PC-3 (cell line): ENCODE measurements at regions of chrX and their contacts with region 1.

Region 1: DNA sequence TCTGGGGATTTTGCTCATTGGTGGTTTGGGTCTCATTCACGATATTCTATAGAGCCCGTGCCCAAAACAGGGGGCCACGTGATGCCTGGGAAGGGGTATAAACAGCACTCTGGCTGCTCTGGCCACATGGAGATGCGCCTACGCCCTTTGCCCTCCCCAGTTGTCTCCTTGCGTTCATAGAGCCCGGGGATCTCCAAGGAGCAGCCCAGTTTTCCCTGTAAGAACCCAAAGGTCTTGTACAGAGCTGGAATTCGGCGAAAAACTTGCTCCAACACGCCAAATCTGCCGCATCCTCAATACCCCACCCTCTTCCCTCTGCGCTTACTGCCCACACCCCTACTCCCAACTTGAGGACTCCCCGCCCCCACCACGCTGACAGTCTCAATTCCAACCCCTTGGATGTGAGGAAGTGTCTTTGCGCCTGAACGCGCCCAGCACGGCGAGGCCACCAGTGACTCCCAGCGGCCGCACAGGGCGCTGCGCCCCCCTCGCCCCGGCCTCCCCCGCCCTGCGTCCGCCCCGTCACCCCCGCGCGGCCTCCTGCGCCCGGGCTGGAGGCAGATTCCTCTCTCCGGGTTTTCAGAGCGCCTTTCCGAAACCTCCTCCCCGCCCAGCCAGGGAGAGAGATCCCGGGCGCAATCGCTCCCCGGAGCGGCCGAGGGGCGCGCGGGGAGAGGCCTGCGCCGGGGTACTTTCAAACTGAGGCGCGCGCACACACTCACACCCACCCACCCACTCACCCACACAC is at the start of gene NHS:
- DNase-seq: peak; percentile 83
- ATAC-seq: peak; percentile 57
- H3K4me3 ChIP-seq: peak within 1 kb of the TSS; percentile 91
- H3K27ac ChIP-seq: peak within 1 kb of the TSS; percentile 26; the same call in 1 of the 2 replicates
- H3K4me1 ChIP-seq: peaks cover 14% of the 10 kb centered on the region
- H3K27me3 ChIP-seq: no peaks in the 10 kb centered on the region
- CTCF ChIP-seq: peak; percentile 57
- total RNA-seq, gene NHS: 4.9 and 5.6 TPM in 2 replicates

Region 2: DNA sequence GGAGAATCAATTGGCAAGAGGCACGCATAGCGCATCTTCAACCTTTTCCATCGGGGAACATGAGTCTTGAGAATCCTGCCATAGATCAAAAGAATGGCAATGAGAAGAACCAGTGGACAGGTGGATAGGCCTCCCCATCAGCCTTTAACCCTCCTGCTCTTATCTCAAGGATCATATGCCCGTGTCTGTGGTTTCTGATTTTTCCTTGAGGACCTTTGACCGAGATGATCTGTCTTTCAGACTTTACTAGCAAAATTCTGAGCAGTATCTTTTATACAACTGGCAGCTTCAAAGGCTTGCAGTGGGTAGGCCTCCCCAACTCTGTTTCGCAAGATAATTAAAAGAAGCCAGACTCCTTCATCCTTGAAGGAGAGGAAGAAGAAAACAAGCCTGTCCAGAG is 254.0 kb before region 1 on chrX:
- CTCF ChIA-PET with region 1: no interaction called
- POLR2A ChIA-PET with region 1: no interaction called
- intact Hi-C with region 1: loop called (anchors 5 kb)
- DNase-seq: no peak
- ATAC-seq: no peak
- H3K4me3 ChIP-seq: no peak overlapping the region
- H3K27ac ChIP-seq: no peak overlapping the region
- H3K4me1 ChIP-seq: no peaks in the 10 kb centered on the region
- H3K27me3 ChIP-seq: no peaks in the 10 kb centered on the region
- CTCF ChIP-seq: no peak

Region 3: DNA sequence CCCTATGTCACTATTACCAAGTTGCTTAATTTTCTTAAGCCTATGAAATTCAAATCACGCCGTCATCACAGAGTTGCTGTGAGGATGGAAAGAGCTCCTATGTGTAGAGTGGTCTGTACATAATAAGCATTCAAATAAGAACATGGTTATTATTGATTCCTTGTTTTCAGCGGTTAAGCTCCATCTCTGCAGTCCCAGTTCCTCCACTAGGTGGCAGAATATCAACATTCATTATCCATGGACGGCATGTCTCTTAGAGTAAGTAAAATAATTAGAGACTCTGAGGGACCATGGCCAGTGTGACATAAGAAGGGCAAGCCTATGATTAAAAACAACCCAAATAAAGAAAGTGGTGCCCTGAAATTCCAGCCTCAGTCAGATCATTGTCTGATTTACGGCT is 132.3 kb before region 1 on chrX:
- CTCF ChIA-PET with region 1: no interaction called
- POLR2A ChIA-PET with region 1: no interaction called
- intact Hi-C with region 1: loop called (anchors 1 kb)
- DNase-seq: peak; percentile 78
- ATAC-seq: peak; percentile 78
- H3K4me3 ChIP-seq: no peak overlapping the region
- H3K27ac ChIP-seq: no peak overlapping the region
- H3K4me1 ChIP-seq: no peaks in the 10 kb centered on the region
- H3K27me3 ChIP-seq: no peaks in the 10 kb centered on the region
- CTCF ChIP-seq: peak; percentile 83

Region 4: GRCh38 chrX:17441965-17442364 is 67.2 kb after region 1 on chrX:
- CTCF ChIA-PET with region 1: no interaction called
- POLR2A ChIA-PET with region 1: no interaction called
- intact Hi-C with region 1: loop called (anchors 10 kb)
- DNase-seq: peak; percentile 80
- ATAC-seq: peak; percentile 97
- H3K4me3 ChIP-seq: 0 out of 2 replicates have a peak overlapping the region, but pooled peaks have one; percentile 30
- H3K27ac ChIP-seq: peak overlapping the region; percentile 93
- H3K4me1 ChIP-seq: peaks cover 33% of the 10 kb centered on the region
- H3K27me3 ChIP-seq: no peaks in the 10 kb centered on the region
- CTCF ChIP-seq: no peak

Region 5: DNA sequence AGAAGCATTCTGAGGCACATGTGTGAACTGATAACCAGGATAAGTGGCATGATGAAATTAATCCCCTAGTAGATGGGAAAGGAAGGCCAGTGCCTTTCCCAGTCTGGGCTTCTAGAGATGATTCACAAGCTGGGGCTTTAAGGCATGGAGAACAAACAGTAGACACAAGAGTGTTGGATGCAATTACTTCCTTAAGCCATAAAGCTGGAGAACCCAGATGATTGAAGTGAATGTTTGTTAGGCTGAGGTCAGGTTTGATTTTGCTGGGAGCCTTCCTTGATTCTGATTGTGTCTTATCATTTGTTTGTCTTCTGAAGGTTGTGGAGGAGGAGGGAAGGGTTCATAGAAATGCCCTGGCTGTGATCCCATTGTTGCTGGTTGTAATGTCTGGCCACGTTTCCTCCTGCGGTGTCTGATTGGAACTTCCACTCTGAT is 125.4 kb after region 1 on chrX:
- CTCF ChIA-PET with region 1: no interaction called
- POLR2A ChIA-PET with region 1: no interaction called
- intact Hi-C with region 1: loop called (anchors 10 kb)
- DNase-seq: peak; percentile 78
- ATAC-seq: peak; percentile 63
- H3K4me3 ChIP-seq: no peak overlapping the region
- H3K27ac ChIP-seq: peak overlapping the region; percentile 92
- H3K4me1 ChIP-seq: peaks cover 43% of the 10 kb centered on the region
- H3K27me3 ChIP-seq: no peaks in the 10 kb centered on the region
- CTCF ChIP-seq: no peak

Region 6: GRCh38 chrX:17521871-17522693 is 147.3 kb after region 1 on chrX:
- CTCF ChIA-PET with region 1: no interaction called
- POLR2A ChIA-PET with region 1: no interaction called
- intact Hi-C with region 1: loop called (anchors 1 kb)
- DNase-seq: peak; percentile 69
- ATAC-seq: peak; percentile 73
- H3K4me3 ChIP-seq: no peak overlapping the region
- H3K27ac ChIP-seq: peak overlapping the region; percentile 57
- H3K4me1 ChIP-seq: peaks cover 12% of the 10 kb centered on the region
- H3K27me3 ChIP-seq: no peaks in the 10 kb centered on the region
- CTCF ChIP-seq: no peak